K562 (cell line): ENCODE measurements at regions of chr2 and their contacts with region 1.

Region 1: DNA sequence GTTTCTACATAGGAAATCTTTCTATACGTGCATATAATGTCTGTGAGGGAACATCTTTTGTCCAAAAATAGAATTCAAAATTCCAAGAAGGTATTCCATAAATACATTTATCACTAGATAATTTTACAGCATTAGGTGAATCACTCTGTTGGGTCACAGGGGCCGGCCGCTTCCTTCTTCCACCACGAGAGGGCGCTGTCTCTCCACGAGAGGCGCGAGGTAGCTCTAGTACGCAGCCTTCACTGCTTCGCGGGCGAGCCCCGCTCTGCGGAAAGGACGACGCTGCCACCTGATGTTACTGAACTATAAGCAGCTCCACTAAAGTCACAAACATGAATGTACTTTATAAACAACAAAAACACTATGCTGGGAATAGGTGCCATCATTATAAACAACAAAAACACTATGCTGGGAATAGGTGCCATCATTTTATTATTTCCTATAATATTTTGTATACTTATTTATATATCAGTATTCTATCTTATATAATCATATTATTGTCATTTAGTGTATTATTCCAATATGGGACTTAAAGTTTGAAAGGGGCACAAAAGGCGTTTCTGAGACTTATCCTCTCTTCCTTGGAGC is 69.4 kb upstream of the REV1 start:
- DNase-seq: peak; percentile 76 to 86 (median 85)
- ATAC-seq: peak; percentile 99
- H3K4me3 ChIP-seq: no peak overlapping the region
- H3K27ac ChIP-seq: no peak overlapping the region
- H3K4me1 ChIP-seq: peaks cover 0 to 3% of the 10 kb centered on the region in 2 experiments; a peak in 1 of 5 replicates
- H3K27me3 ChIP-seq: peaks cover 9 to 36% of the 10 kb centered on the region in 2 experiments; a peak in 4 of 5 replicates
- CTCF ChIP-seq: peak; percentile 94 to 96 (median 96)
- EP300 ChIP-seq: no peak
- POLR2A ChIP-seq: no peak
- RAD21 ChIP-seq: peak; percentile 99 to 100

Region 2: GRCh38 chr2:99085421-99085820 is 473.7 kb before region 1 on chr2:
- CTCF ChIA-PET with region 1: interaction called, 3 read pairs
- POLR2A ChIA-PET with region 1: no interaction called
- in situ Hi-C with region 1: no loop called
- intact Hi-C with region 1: loop called (anchors 10 kb)
- DNase-seq: peak in 1 of 4 experiments; percentile 33
- ATAC-seq: peak; percentile 66; the same call in 2 of the 3 replicates
- H3K4me3 ChIP-seq: no peak overlapping the region
- H3K27ac ChIP-seq: no peak overlapping the region
- H3K4me1 ChIP-seq: no peaks in the 10 kb centered on the region
- H3K27me3 ChIP-seq: peaks cover 0 to 5% of the 10 kb centered on the region in 2 experiments; a peak in 1 of 5 replicates
- CTCF ChIP-seq: peak in 2 of 3 experiments; percentile 31 to 39; a peak in 4 of 6 replicates
- EP300 ChIP-seq: no peak
- POLR2A ChIP-seq: no peak
- RAD21 ChIP-seq: no peak

Region 3: GRCh38 chr2:99489761-99490622 is 69.2 kb before region 1 on chr2 and contains the start of gene REV1:
- CTCF ChIA-PET with region 1: no interaction called
- POLR2A ChIA-PET with region 1: no interaction called
- in situ Hi-C with region 1: no loop called
- intact Hi-C with region 1: no loop called
- DNase-seq: peak; percentile 96 to 97 (median 96)
- ATAC-seq: peak; percentile 89
- H3K4me3 ChIP-seq: peak within 1 kb of the TSS; percentile 62
- H3K27ac ChIP-seq: peak within 1 kb of the TSS; percentile 90
- H3K4me1 ChIP-seq: peaks cover 10 to 12% of the 10 kb centered on the region in 2 experiments
- H3K27me3 ChIP-seq: no peaks in the 10 kb centered on the region
- CTCF ChIP-seq: peak; percentile 78 to 85 (median 84)
- EP300 ChIP-seq: no peak
- POLR2A ChIP-seq: no peak; the same call in 1 of the 2 replicates
- RAD21 ChIP-seq: peak; percentile 80 to 81
- polyA plus RNA-seq, gene REV1: 12.8 to 13.1 TPM

Region 4: GRCh38 chr2:99576775-99577174 is 17.6 kb after region 1 on chr2:
- CTCF ChIA-PET with region 1: no interaction called
- POLR2A ChIA-PET with region 1: no interaction called
- in situ Hi-C with region 1: no loop called
- intact Hi-C with region 1: no loop called
- DNase-seq: no peak
- ATAC-seq: no peak
- H3K4me3 ChIP-seq: no peak overlapping the region
- H3K27ac ChIP-seq: no peak overlapping the region
- H3K4me1 ChIP-seq: no peaks in the 10 kb centered on the region; a peak in 1 of 5 replicates
- H3K27me3 ChIP-seq: peaks cover 44 to 50% of the 10 kb centered on the region in 2 experiments
- CTCF ChIP-seq: no peak
- EP300 ChIP-seq: no peak
- POLR2A ChIP-seq: no peak
- RAD21 ChIP-seq: no peak

Region 5: DNA sequence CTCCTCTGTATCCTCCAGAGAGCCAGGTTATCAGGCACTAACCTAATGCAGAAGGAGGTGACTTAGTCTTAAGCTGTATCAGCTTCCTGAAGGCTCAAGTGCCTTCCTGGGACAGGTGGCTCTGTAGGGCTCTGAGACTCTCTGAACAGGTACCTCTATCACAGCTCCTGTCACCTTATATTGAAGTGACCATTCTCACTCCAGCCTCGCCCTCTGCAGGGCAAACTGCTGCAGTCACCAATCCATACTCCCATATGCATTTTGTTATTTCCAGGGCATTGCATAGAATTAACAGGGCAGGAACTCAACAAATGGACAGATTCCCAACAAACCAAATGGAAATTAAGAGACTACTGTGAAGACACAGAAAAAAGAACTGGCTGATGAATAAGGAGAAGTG is 133.6 kb after region 1 on chr2:
- CTCF ChIA-PET with region 1: no interaction called
- POLR2A ChIA-PET with region 1: no interaction called
- in situ Hi-C with region 1: no loop called
- intact Hi-C with region 1: loop called (anchors 5 kb)
- DNase-seq: peak in 1 of 4 experiments; percentile 28
- ATAC-seq: peak; percentile 57
- H3K4me3 ChIP-seq: no peak overlapping the region
- H3K27ac ChIP-seq: no peak overlapping the region
- H3K4me1 ChIP-seq: no peaks in the 10 kb centered on the region
- H3K27me3 ChIP-seq: peaks cover 8 to 33% of the 10 kb centered on the region in 2 experiments
- CTCF ChIP-seq: 0 out of 6 replicates have a peak, but pooled peaks have one; percentile 13 to 21 (median 15)
- EP300 ChIP-seq: no peak
- POLR2A ChIP-seq: no peak
- RAD21 ChIP-seq: peak in 1 of 2 experiments; percentile 65; a peak in 2 of 4 replicates

Region 6: DNA sequence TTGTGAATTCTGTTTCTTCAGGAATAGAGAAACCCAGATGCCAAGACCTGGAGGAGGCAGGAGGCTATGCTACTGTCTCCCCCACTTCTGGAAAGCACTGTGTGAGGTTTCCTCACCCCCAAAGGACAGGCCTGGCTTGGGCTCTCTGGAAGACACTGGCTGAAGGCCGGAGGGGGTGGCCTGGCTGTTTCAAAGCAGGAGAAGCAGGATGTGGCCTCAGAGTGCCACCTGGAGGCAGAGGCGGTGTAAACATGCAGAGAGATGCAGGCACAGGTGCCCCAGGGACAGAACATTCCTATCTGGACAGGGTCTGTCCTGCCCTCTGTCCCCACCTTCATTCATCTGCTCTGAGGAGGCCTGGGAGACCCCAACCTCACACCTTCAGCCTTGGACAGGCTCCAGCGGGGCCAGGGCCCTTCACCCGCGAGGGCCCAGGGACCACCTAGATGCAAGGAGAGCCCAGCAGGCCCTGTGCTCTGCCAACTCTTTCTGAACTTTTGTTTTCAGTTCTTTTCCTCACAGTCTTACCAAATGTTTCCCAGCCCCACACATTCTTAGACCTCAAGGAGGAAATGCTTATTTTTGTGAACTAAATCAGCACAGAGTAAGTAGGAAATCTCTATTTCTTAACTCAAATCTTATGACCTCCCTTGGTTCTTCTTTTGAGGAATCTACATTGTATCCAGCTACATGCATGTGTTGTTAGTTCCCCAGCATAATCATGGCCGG is 683.9 kb after region 1 on chr2:
- CTCF ChIA-PET with region 1: interaction called, 11 read pairs
- POLR2A ChIA-PET with region 1: no interaction called
- in situ Hi-C with region 1: loop called (anchors 5 kb)
- intact Hi-C with region 1: loop called (anchors 1 kb)
- DNase-seq: peak; percentile 54 to 72 (median 63)
- ATAC-seq: peak; percentile 94
- H3K4me3 ChIP-seq: no peak overlapping the region
- H3K27ac ChIP-seq: no peak overlapping the region
- H3K4me1 ChIP-seq: no peaks in the 10 kb centered on the region
- H3K27me3 ChIP-seq: peaks cover 8 to 67% of the 10 kb centered on the region in 2 experiments; a peak in 4 of 5 replicates
- CTCF ChIP-seq: peak; percentile 72 to 79 (median 78)
- EP300 ChIP-seq: no peak
- POLR2A ChIP-seq: no peak
- RAD21 ChIP-seq: peak; percentile 88 to 93

Region 7: GRCh38 chr2:100381240-100381639 is 822.1 kb after region 1 on chr2:
- CTCF ChIA-PET with region 1: interaction called, 4 read pairs
- POLR2A ChIA-PET with region 1: no interaction called
- in situ Hi-C with region 1: loop called (anchors 25 kb)
- intact Hi-C with region 1: no loop called
- DNase-seq: peak; percentile 66 to 90 (median 71)
- ATAC-seq: peak; percentile 96
- H3K4me3 ChIP-seq: no peak overlapping the region
- H3K27ac ChIP-seq: no peak overlapping the region
- H3K4me1 ChIP-seq: no peaks in the 10 kb centered on the region; a peak in 1 of 5 replicates
- H3K27me3 ChIP-seq: no peaks in the 10 kb centered on the region
- CTCF ChIP-seq: peak; percentile 85 to 95 (median 89)
- EP300 ChIP-seq: no peak
- POLR2A ChIP-seq: no peak
- RAD21 ChIP-seq: peak; percentile 95 to 98